ENCODE measurements at regions of chr1 and their contacts with region 1.

Region 1: DNA sequence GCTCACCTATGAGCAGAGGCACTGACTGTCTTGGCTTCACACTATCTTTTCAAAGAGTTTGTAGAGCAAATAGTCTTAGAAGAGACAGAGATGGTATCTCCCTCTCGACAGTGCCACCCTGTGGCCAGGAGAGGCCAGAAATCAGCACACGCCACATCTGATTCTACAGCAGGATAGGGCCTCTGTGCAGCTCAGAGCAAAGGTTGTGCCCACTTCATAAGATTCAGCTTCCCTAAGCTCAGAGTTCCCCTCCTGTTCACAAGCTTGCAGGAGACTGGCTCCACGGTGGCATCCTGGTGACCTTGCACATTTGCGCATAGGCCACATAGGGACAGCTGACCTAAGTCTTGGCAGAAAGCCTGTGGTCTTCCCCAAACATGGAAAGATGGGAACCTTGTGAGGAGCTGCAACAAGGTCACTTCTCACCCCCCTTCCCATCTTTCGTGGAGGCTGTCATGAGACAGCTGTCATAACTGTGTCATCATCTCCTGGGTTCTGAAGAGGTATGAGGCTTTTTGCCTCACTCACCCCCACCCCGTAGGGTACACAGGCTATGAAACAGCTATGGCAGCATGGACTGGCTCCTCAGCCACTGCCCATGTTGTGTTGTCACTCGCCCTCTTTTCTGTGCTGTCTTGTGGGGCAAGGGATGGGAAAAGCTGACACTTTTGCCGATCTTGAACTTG is 3.0 kb downstream of the ITLN2 start:
- DNase-seq: no peak
- H3K4me3 ChIP-seq: no peak overlapping the region
- H3K27ac ChIP-seq: peak overlapping the region; percentile 73 to 86 (median 74)
- H3K4me1 ChIP-seq: peaks cover 10 to 35% (median 14%) of the 10 kb centered on the region in 3 donors
- H3K27me3 ChIP-seq: peaks cover 0 to 6% (median 0%) of the 10 kb centered on the region in 4 donors
- CTCF ChIP-seq: peak; percentile 27 to 83 (median 64)
- POLR2A ChIP-seq: no peak

Region 2: DNA sequence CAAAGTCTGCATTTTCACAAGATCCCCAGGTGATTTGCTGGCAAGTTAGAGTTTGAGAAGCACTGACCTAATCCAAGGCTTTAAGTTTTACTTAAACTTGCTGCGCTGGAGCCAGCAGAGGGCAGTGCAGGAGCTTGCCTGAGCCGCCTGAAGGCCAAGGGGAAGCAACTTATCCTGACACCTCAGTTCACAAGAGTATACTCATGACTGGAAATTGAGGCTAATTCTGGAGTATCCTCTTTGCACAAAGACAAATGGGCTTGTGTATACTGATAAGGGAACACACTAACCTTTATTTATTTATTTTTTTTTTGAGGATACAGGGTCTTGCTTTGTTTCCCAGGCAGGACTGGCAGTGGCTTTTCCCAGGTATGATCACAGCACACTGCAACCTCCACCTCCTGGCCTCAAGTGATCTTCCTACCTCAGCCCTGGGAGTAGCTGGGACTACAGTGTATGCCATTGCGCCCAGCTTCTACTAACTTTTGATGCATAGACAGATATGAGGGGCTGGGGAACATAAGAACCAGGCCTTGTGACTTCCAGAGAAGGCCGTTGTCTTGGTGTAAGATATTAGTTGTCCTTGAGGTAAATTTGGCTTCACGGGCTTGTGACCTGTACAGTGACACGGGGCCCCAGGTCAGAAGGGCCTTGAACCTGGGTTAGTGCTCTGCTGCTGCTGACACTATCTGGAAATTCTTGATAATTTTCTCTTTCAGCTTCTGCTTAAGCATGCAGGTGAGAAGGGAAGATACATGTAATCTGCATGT is 275.8 kb before region 1 on chr1:
- intact Hi-C with region 1: loop called (anchors 10 kb)
- DNase-seq: no peak
- H3K4me3 ChIP-seq: no peak overlapping the region
- H3K27ac ChIP-seq: peak overlapping the region in 1 of 4 donors; percentile 39
- H3K4me1 ChIP-seq: peaks cover 4 to 30% (median 10%) of the 10 kb centered on the region in 3 donors
- H3K27me3 ChIP-seq: peaks cover 0 to 11% (median 0%) of the 10 kb centered on the region in 4 donors
- CTCF ChIP-seq: peak; percentile 57 to 78 (median 64)
- POLR2A ChIP-seq: no peak

Region 3: DNA sequence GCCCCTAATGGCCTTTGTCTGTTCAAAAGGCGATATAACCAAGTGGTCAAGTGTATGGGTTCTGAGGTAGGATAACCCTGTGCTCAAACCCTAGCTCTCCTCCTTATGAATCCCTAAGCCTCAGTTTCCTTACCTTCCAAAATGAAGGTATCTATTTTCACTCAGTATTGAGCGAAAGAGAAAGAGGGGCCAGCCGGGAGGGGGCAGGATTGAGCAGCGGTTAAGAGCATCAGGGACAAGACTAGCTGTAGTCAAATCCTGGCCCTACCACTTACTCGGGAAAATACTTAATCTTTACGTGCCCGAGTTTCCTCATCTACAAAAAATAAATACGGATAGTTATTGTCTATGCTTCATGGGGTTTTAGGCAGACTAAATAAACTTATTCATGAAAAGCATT is 130.0 kb before region 1 on chr1:
- intact Hi-C with region 1: no loop called
- DNase-seq: no peak
- H3K4me3 ChIP-seq: no peak overlapping the region
- H3K27ac ChIP-seq: no peak overlapping the region
- H3K4me1 ChIP-seq: no peaks in the 10 kb centered on the region
- H3K27me3 ChIP-seq: no peaks in the 10 kb centered on the region
- CTCF ChIP-seq: no peak
- POLR2A ChIP-seq: no peak

Region 4: DNA sequence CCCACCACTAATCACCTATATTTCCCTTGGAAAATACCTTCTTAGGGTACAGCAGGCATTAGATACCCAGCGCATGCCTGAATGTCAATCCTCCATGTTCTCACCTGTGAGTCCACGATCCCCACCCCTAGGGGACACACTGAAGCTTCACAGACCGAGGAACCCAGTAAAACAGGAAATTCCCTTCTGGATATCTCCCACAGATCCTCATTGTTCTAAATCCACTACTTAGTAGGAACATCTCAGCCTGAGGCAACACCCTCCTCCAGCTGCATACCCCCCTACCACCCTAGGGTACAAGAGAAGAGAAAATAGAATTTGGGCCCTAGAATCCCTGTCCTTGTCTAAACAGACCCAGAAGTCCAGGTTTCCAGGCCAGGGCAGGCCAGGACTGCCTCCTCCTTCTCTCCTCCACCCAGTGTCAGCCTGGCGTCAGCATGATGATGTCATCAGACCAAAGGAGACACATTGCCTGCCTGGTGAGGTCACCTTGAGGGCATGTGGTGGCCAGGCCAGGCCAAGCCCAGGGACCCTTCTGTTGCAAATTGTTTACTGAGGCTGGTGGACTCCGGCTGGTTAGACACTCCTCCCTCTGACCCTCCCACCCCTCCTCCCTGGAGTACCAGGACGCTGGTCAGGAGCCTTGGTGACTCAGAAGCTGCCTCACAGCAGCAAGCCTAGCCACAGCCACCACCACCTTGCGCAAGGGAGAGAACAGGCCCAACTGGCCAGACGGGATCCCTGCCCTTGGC is 131.6 kb after region 1 on chr1:
- intact Hi-C with region 1: no loop called
- DNase-seq: peak; percentile 41
- H3K4me3 ChIP-seq: peak overlapping the region in 3 of 4 donors; percentile 22 to 64 (median 28)
- H3K27ac ChIP-seq: peak overlapping the region; percentile 89 to 97 (median 94)
- H3K4me1 ChIP-seq: peaks cover 33 to 87% (median 34%) of the 10 kb centered on the region in 3 donors
- H3K27me3 ChIP-seq: peaks cover 0 to 7% (median 0%) of the 10 kb centered on the region in 4 donors
- CTCF ChIP-seq: peak in 2 of 6 experiments; percentile 3 to 24
- POLR2A ChIP-seq: peak in 1 of 4 donors; percentile 11

Measured in esophagus squamous epithelium (tissue), 5 donors.